Heart right ventricle (tissue), 16 donors: ENCODE measurements at regions of chr6 and their contacts with region 1.

Region 1: GRCh38 chr6:34602318-34603111 is 46.4 kb upstream of the SPDEF start:
- DNase-seq: no peak
- ATAC-seq: peak in 3 of 8 donors; percentile 32 to 67 (median 57)
- H3K4me3 ChIP-seq: no peak overlapping the region
- H3K27ac ChIP-seq: no peak overlapping the region
- H3K4me1 ChIP-seq: peaks cover 13 to 54% (median 36%) of the 10 kb centered on the region in 9 donors
- H3K27me3 ChIP-seq: no peaks in the 10 kb centered on the region
- CTCF ChIP-seq: no peak

Region 2: GRCh38 chr6:33781114-33781975 is 821.2 kb before region 1 on chr6:
- intact Hi-C with region 1: no loop called
- DNase-seq: peak in 1 of 2 donors; percentile 45
- ATAC-seq: peak in 7 of 8 donors; percentile 40 to 76 (median 61)
- H3K4me3 ChIP-seq: no peak overlapping the region
- H3K27ac ChIP-seq: peak overlapping the region in 8 of 10 donors; percentile 4 to 60 (median 10)
- H3K4me1 ChIP-seq: peaks cover 9 to 63% (median 45%) of the 10 kb centered on the region in 9 donors
- H3K27me3 ChIP-seq: no peaks in the 10 kb centered on the region
- CTCF ChIP-seq: no peak

Region 3: DNA sequence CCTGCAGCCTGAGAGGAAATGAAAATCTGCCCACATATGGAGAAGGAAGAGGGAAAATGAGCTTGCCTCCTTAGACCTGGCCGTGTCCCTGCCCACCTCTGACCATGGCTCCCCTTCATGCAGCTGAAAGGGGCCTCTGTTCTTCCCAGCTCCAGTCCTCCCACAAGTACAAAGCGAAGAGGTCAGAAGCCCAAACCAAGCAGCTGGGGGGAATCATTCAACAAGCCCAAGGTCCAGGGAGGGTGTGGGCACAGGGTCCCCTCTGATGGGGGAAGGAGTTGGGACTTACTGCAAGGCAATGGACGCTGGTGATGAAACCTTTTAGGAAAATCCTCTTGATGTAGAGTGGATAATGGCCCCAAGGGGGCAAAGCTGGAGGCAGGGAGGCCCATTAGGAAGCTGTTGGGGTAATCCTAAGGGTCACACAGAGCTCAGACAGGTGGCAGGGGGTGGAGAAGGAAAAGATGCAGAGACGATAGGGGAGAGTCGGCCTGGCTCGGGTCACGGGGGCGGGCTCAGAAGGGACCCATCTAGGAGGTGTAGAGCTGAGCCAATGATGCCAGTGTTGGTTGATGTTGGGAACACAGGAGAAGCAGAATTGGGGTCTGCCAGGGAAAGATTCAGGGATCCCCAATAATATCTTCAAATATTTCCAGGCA is 440.5 kb before region 1 on chr6:
- intact Hi-C with region 1: loop called in 3 of 10 experiments (anchors 10 kb)
- DNase-seq: no peak
- ATAC-seq: peak in 1 of 8 donors; percentile 40
- H3K4me3 ChIP-seq: no peak overlapping the region
- H3K27ac ChIP-seq: no peak overlapping the region
- H3K4me1 ChIP-seq: no peaks in the 10 kb centered on the region
- H3K27me3 ChIP-seq: no peaks in the 10 kb centered on the region
- CTCF ChIP-seq: no peak

Region 4: GRCh38 chr6:34196126-34196830 is 406.2 kb before region 1 on chr6:
- intact Hi-C with region 1: loop called in 4 of 10 experiments (anchors 10 kb)
- DNase-seq: peak; percentile 85 to 92
- ATAC-seq: peak; percentile 98 to 99 (median 99)
- H3K4me3 ChIP-seq: peak overlapping the region in 9 of 10 donors; percentile 41 to 72 (median 56)
- H3K27ac ChIP-seq: peak overlapping the region in 1 of 10 donors; percentile 26
- H3K4me1 ChIP-seq: peaks cover 0 to 10% (median 5%) of the 10 kb centered on the region in 9 donors
- H3K27me3 ChIP-seq: peaks cover 0 to 4% (median 0%) of the 10 kb centered on the region in 7 donors
- CTCF ChIP-seq: peak; percentile 95 to 99 (median 98)

Region 5: GRCh38 chr6:34459899-34460593 is 142.5 kb before region 1 on chr6:
- intact Hi-C with region 1: loop called in 5 of 10 experiments (anchors 5 to 10 kb)
- DNase-seq: peak in 1 of 2 donors; percentile 19
- ATAC-seq: peak in 5 of 8 donors; percentile 37 to 51 (median 43)
- H3K4me3 ChIP-seq: no peak overlapping the region
- H3K27ac ChIP-seq: no peak overlapping the region
- H3K4me1 ChIP-seq: peaks cover 0 to 3% (median 0%) of the 10 kb centered on the region in 9 donors
- H3K27me3 ChIP-seq: peaks cover 0 to 15% (median 12%) of the 10 kb centered on the region in 7 donors
- CTCF ChIP-seq: peak; percentile 13 to 75 (median 65)

Region 6: DNA sequence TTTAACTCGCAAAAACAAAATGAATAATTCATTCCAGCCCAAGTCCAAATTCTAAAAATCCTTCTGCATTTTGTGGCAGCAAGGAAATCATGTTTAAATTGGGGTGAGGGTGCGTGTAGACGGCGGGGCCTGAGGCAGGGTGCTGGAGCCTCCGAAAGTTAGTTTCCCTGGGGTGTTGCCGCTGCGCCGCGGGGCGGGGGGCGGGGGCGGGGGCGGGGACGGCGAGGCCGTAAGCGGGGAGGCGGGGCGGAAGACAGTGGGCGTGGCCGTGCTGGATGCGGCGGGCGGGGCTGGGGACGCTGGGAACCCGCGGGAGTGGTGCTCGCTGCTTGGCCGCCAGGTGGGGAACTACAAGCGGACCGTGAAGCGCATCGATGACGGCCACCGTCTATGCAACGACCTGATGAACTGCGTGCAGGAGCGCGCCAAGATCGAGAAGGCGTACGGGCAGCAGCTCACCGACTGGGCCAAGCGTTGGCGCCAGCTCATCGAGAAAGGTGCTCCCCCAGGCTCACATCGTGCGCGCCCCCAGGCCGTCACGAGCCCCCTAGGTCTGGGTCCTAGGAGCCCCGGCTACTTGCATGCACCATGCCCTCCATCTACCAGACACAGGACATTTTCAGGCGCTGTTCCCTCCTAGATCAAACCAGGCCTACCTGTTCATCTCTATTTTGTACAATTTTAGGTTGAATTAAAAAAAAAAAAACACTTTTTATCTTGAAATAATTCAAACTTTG is 75.4 kb before region 1 on chr6:
- intact Hi-C with region 1: loop called in 3 of 10 experiments (anchors 5 kb)
- DNase-seq: peak; percentile 96 to 97
- ATAC-seq: peak; percentile 84 to 95 (median 94)
- H3K4me3 ChIP-seq: peak overlapping the region in 8 of 10 donors; percentile 16 to 48 (median 40)
- H3K27ac ChIP-seq: peak overlapping the region in 7 of 10 donors; percentile 13 to 55 (median 52)
- H3K4me1 ChIP-seq: peaks cover 5 to 21% (median 7%) of the 10 kb centered on the region in 9 donors
- H3K27me3 ChIP-seq: no peaks in the 10 kb centered on the region
- CTCF ChIP-seq: peak; percentile 47 to 94 (median 81)

Region 7: GRCh38 chr6:34536251-34536950 is 66.1 kb before region 1 on chr6:
- intact Hi-C with region 1: loop called in 2 of 10 experiments (anchors 5 kb)
- DNase-seq: no peak
- ATAC-seq: no peak
- H3K4me3 ChIP-seq: no peak overlapping the region
- H3K27ac ChIP-seq: no peak overlapping the region
- H3K4me1 ChIP-seq: no peaks in the 10 kb centered on the region
- H3K27me3 ChIP-seq: no peaks in the 10 kb centered on the region
- CTCF ChIP-seq: no peak

Region 8: GRCh38 chr6:34723203-34723602 is 120.7 kb after region 1 on chr6:
- intact Hi-C with region 1: no loop called
- DNase-seq: no peak
- ATAC-seq: no peak
- H3K4me3 ChIP-seq: no peak overlapping the region
- H3K27ac ChIP-seq: no peak overlapping the region
- H3K4me1 ChIP-seq: peaks cover 0 to 4% (median 0%) of the 10 kb centered on the region in 9 donors
- H3K27me3 ChIP-seq: no peaks in the 10 kb centered on the region
- CTCF ChIP-seq: no peak